Panc1 (cell line): ENCODE measurements at regions of chr1 and their contacts with region 1.

Region 1: DNA sequence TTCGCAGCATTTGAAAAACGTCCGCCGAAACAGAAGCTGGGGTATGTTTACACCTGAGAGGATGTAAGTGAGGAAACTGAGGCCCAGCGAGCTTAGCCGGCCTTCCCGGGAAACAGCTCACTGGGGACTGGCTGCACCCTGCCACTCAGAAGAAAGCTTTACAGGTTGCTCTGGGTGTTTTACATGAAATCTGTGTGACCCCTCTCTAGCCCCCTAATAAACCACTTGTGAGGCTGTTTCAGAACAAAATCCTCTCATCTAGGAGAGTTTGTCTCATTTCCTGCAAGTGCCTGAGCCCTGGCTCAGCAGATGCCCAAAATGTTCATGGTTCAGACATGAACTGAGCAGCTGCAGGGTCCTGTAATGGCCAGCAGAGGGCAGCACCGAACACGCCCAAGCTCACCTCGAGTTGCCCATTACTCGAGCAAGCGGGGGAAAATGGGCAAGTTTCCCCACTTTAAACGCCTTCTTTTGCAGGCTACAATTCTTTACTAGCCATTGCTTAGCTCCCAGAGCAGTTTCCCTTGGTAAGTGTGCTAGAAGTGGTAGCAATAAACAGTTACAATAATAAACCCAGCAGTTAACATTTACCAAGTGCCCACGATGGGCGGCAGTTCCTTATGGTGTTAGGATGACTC is 76.4 kb downstream of the FHAD1 start:
- DNase-seq: peak; percentile 61
- ATAC-seq: peak; percentile 94
- H3K4me3 ChIP-seq: no peak overlapping the region
- H3K27ac ChIP-seq: no peak overlapping the region
- H3K4me1 ChIP-seq: 0 out of 2 replicates have a peak, but pooled peaks cover 2% of the 10 kb centered on the region
- H3K27me3 ChIP-seq: no peaks in the 10 kb centered on the region
- CTCF ChIP-seq: peak; percentile 97

Region 2: DNA sequence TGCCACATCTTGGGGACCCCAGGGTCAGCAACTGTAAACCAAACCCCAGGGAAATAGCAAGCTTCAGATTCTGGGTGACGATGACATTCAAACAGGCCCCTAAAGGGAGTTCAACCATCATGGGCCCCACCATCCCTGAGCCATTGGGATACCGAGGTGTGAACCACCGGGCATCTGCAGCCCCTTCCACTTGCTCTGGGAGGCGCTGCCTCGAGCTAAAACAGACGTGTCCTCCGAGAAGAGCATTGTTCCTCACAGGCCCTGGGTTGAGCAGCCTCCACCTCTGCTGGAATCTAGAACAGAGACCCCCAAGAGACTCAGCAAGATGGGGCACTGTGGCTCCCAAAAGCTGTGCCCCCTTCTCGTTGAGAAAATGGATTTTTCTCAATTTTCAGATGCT is 67.2 kb after region 1 on chr1:
- CTCF ChIA-PET with region 1: interaction called, 10 read pairs
- POLR2A ChIA-PET with region 1: no interaction called
- in situ Hi-C with region 1: loop called (anchors 5 kb)
- intact Hi-C with region 1: no loop called
- DNase-seq: no peak
- ATAC-seq: no peak
- H3K4me3 ChIP-seq: no peak overlapping the region
- H3K27ac ChIP-seq: no peak overlapping the region
- H3K4me1 ChIP-seq: no peaks in the 10 kb centered on the region; the same call in 1 of the 2 replicates
- H3K27me3 ChIP-seq: no peaks in the 10 kb centered on the region
- CTCF ChIP-seq: no peak

Region 3: DNA sequence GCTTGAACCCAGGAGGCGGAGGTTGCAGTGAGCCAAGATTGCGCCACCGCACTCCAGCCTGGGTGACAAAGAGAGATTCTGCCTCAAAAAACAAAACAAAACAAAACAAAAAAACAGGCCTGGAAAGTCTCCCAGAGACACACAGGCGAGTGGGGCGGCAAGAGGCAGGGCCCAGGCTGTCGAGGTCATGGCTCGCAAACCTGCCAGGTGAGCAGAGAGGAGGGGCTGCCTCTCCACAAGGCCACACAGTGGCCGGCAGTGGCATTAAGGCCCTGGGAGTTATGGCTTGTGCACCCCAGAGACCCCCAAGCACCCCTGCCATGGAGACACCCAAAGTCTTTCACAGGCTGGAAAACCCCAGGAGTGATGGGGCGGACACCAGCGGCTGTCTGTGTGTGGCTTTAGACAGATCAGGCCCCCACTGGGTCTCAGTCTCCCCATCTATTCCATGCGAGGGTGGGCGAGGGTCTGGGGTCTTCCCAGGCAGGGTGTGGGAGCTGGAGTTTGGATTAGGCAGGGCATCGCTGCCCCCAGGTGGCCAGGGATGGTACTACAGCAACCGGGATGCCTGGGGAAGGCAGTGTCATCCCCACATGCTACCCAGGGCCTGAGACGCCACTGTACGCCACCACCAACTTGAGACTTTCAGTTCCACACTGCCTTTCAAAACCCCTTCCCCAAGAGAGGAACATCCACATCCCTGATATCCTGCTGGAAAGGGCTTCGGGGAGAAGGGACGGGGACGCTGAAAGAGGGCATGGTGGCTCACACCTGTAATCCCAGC is 107.5 kb after region 1 on chr1:
- CTCF ChIA-PET with region 1: interaction called, 8 read pairs
- POLR2A ChIA-PET with region 1: interaction called, 5 read pairs
- in situ Hi-C with region 1: no loop called
- intact Hi-C with region 1: loop called (anchors 1 kb)
- DNase-seq: peak; percentile 80
- ATAC-seq: peak; percentile 61
- H3K4me3 ChIP-seq: no peak overlapping the region
- H3K27ac ChIP-seq: no peak overlapping the region
- H3K4me1 ChIP-seq: peaks cover 21% of the 10 kb centered on the region
- H3K27me3 ChIP-seq: no peaks in the 10 kb centered on the region
- CTCF ChIP-seq: peak; percentile 96

Region 4: DNA sequence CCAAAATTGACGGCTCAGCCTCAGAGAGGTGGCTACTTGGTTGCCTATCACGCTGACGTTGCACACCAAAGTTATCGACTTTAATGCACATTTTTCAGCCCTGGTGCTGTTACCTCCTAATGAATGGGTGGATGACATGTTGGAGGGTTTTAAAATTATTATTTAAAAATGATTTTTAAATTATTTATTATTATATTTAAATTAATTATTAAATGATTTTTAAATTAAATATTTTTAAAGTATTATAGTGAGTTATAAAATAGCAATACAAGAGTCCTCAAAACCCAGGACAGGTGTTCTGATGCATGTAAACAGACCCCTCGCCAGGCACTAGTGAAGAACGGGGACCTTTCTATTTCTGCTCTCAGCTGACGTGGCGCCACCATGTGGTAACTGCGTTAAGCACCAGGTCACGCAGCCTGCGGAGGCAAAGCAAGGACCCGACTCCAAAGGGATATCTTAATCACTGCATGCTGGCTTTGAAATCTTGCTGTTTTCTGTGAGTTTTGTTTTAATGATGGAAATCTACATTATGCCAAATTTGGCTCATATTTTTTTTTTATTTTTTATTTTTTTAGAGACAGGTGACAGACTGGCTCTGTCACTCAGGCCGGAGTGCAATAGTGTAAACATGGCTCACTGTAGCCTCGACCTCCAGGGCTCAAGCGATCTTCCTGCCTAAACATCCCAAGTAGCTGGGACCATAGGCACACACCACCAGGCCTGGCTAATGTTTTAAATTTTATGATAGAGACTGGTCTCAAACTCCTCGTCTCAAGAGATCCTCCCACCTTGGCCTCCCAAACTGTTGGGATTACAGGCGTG is 177.9 kb after region 1 on chr1:
- CTCF ChIA-PET with region 1: interaction called, 5 read pairs
- POLR2A ChIA-PET with region 1: no interaction called
- in situ Hi-C with region 1: no loop called
- intact Hi-C with region 1: loop called (anchors 5 kb)
- DNase-seq: no peak
- ATAC-seq: peak; percentile 92
- H3K4me3 ChIP-seq: no peak overlapping the region
- H3K27ac ChIP-seq: no peak overlapping the region
- H3K4me1 ChIP-seq: no peaks in the 10 kb centered on the region
- H3K27me3 ChIP-seq: no peaks in the 10 kb centered on the region
- CTCF ChIP-seq: peak; percentile 94